ENCODE measurements at regions of chr1 and their contacts with region 1.

Region 1: DNA sequence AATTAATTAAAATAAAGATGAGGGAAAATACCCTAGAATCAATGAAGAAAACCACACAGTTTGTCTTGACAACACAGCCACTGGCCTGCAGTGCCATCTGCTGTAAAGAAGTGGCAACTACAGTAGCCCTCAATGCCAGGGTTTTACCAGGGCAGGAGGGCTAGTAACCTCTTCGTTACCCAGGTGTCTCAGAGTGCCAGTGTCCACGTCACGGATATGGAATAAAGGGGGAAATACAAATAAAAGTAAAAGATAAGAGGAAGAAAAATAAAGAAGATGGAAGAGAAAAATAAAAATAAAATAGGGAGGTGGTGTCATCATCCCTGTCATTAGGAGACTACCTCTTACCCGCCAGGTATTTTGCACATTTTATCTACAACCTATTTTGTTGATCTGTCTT is 14.2 kb upstream of the SLC44A3 start:
- DNase-seq: peak; percentile 50 to 65 (median 58)
- ATAC-seq: peak; percentile 72
- H3K4me3 ChIP-seq: no peak overlapping the region
- H3K27ac ChIP-seq: no peak overlapping the region
- H3K4me1 ChIP-seq: peaks cover 3% of the 10 kb centered on the region in 2 experiments; a peak in 4 of 5 replicates
- H3K27me3 ChIP-seq: no peaks in the 10 kb centered on the region
- CTCF ChIP-seq: peak; percentile 83 to 88 (median 88)
- EP300 ChIP-seq: no peak
- POLR2A ChIP-seq: no peak
- RAD21 ChIP-seq: peak; percentile 90 to 91

Region 2: GRCh38 chr1:94335950-94336349 is 470.0 kb before region 1 on chr1:
- CTCF ChIA-PET with region 1: no interaction called
- POLR2A ChIA-PET with region 1: no interaction called
- in situ Hi-C with region 1: no loop called
- intact Hi-C with region 1: loop called (anchors 5 kb)
- DNase-seq: peak; percentile 27 to 75 (median 36)
- ATAC-seq: peak; percentile 89
- H3K4me3 ChIP-seq: no peak overlapping the region
- H3K27ac ChIP-seq: no peak overlapping the region
- H3K4me1 ChIP-seq: no peaks in the 10 kb centered on the region; a peak in 1 of 5 replicates
- H3K27me3 ChIP-seq: peaks cover 8 to 16% of the 10 kb centered on the region in 2 experiments; a peak in 4 of 5 replicates
- CTCF ChIP-seq: peak; percentile 73 to 94 (median 87)
- EP300 ChIP-seq: no peak
- POLR2A ChIP-seq: no peak
- RAD21 ChIP-seq: peak; percentile 93 to 94

Region 3: GRCh38 chr1:94514095-94514727 is 291.7 kb before region 1 on chr1:
- CTCF ChIA-PET with region 1: interaction called, 11 read pairs
- POLR2A ChIA-PET with region 1: no interaction called
- in situ Hi-C with region 1: no loop called
- intact Hi-C with region 1: loop called (anchors 2 kb)
- DNase-seq: peak in 2 of 4 experiments; percentile 25 to 54
- ATAC-seq: peak; percentile 88
- H3K4me3 ChIP-seq: no peak overlapping the region
- H3K27ac ChIP-seq: no peak overlapping the region
- H3K4me1 ChIP-seq: no peaks in the 10 kb centered on the region
- H3K27me3 ChIP-seq: no peaks in the 10 kb centered on the region
- CTCF ChIP-seq: peak; percentile 64 to 71 (median 65)
- EP300 ChIP-seq: no peak
- POLR2A ChIP-seq: no peak
- RAD21 ChIP-seq: peak; percentile 35 to 55; a peak in 3 of 4 replicates

Region 4: DNA sequence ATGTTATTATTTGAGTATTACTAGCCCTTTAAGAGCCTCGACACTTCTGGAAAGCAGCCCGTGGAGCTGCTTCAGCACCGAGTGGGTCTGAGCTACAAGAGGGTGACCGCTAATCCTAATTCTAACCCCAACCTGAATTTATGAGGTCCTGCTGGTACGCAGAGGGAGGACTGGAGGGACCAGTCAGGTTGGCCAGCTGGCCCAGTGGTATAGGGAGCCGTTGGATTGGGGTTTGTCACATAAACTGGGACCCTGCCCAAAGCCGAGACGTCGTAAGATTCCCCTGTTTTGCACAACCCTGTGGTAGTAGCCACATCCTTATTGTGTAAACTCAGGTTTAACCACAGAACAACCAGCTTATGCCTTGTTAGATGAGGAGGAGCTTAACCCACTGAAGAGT is 203.6 kb before region 1 on chr1:
- CTCF ChIA-PET with region 1: no interaction called
- POLR2A ChIA-PET with region 1: no interaction called
- in situ Hi-C with region 1: no loop called
- intact Hi-C with region 1: loop called (anchors 10 kb)
- DNase-seq: no peak
- ATAC-seq: no peak
- H3K4me3 ChIP-seq: no peak overlapping the region
- H3K27ac ChIP-seq: no peak overlapping the region
- H3K4me1 ChIP-seq: no peaks in the 10 kb centered on the region; a peak in 1 of 5 replicates
- H3K27me3 ChIP-seq: peaks cover 3 to 12% of the 10 kb centered on the region in 2 experiments; a peak in 2 of 5 replicates
- CTCF ChIP-seq: no peak
- EP300 ChIP-seq: no peak
- POLR2A ChIP-seq: no peak
- RAD21 ChIP-seq: no peak

Region 5: DNA sequence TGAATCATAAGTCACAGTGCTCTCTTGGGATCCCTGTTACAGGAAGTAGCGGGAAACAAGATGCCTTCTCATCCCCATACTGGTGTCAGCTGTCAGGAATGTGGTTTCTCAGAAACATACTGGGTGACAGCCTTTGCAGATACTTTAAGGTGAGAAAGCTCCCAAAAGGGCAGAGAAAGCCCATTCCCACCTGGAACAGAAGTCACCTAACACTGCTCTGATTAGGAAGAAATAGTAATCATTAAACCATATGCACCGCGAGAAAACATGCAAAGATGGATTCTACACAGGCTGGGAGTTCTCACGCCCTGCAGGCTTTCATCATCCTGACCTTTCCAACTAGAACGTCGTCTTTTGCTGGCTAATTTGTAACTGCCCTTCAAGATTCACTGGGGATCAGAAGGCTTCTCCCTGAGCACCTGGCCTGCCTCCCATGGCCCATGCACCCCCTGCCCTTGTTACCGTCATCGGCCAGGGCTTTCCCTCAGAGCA is 31.9 kb before region 1 on chr1:
- CTCF ChIA-PET with region 1: no interaction called
- POLR2A ChIA-PET with region 1: no interaction called
- in situ Hi-C with region 1: no loop called
- intact Hi-C with region 1: no loop called
- DNase-seq: no peak
- ATAC-seq: no peak
- H3K4me3 ChIP-seq: no peak overlapping the region
- H3K27ac ChIP-seq: no peak overlapping the region
- H3K4me1 ChIP-seq: no peaks in the 10 kb centered on the region
- H3K27me3 ChIP-seq: peaks cover 0 to 3% of the 10 kb centered on the region in 2 experiments; a peak in 2 of 5 replicates
- CTCF ChIP-seq: no peak
- EP300 ChIP-seq: no peak
- POLR2A ChIP-seq: no peak
- RAD21 ChIP-seq: no peak